Calu3 (cell line): ENCODE measurements at regions of chr6 and their contacts with region 1.

Region 1: GRCh38 chr6:18293076-18293904 is 29.0 kb upstream of the DEK start:
- DNase-seq: no peak
- H3K4me3 Mint-ChIP-seq: no peak overlapping the region
- H3K27ac Mint-ChIP-seq: no peak overlapping the region
- H3K4me1 Mint-ChIP-seq: no peaks in the 10 kb centered on the region
- H3K27me3 Mint-ChIP-seq: no peaks in the 10 kb centered on the region
- CTCF ChIP-seq: no peak

Region 2: GRCh38 chr6:17640477-17640917 is 652.8 kb before region 1 on chr6:
- CTCF ChIA-PET with region 1: interaction called, 12 read pairs
- intact Hi-C with region 1: no loop called
- DNase-seq: no peak
- H3K4me3 Mint-ChIP-seq: no peak overlapping the region
- H3K27ac Mint-ChIP-seq: no peak overlapping the region
- H3K4me1 Mint-ChIP-seq: no peaks in the 10 kb centered on the region
- H3K27me3 Mint-ChIP-seq: no peaks in the 10 kb centered on the region
- CTCF ChIP-seq: no peak

Region 3: DNA sequence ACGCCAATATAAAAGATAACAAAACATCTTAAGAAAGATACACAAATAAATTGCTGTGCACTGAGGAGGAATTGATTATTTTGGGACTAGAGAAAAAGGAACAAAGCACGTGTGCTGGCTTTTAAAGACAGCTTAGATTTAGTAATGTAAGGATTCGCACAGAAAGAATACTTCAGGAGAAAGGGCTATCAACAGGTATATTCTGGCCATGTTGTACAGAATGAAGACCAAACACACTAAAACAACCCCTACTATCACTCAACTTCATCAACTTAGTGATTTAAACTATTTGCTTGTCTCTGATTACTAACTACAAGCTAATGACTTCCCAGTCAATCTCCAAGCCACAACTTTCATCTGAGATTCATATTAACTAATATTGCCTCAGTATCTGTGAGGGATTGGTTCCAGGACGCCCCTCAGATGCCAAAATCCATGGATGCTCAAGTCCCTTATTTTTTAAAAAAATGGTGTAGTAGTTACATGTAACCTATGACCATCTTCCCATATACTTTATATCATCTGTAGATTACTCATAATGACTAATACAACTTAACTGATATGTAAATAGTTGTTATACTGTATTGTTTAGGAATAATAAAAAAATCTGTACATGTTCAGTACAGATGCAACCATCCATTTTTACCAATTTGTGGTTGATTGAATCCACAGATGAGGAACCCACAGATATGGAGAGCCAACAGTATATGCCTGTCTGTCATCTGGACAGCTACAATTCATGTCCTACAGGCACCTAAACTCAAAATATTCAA is 33.4 kb before region 1 on chr6:
- CTCF ChIA-PET with region 1: no interaction called
- intact Hi-C with region 1: no loop called
- DNase-seq: no peak
- H3K4me3 Mint-ChIP-seq: peak overlapping the region; percentile 79
- H3K27ac Mint-ChIP-seq: no peak overlapping the region
- H3K4me1 Mint-ChIP-seq: peaks cover 31% of the 10 kb centered on the region
- H3K27me3 Mint-ChIP-seq: no peaks in the 10 kb centered on the region
- CTCF ChIP-seq: no peak

Region 4: DNA sequence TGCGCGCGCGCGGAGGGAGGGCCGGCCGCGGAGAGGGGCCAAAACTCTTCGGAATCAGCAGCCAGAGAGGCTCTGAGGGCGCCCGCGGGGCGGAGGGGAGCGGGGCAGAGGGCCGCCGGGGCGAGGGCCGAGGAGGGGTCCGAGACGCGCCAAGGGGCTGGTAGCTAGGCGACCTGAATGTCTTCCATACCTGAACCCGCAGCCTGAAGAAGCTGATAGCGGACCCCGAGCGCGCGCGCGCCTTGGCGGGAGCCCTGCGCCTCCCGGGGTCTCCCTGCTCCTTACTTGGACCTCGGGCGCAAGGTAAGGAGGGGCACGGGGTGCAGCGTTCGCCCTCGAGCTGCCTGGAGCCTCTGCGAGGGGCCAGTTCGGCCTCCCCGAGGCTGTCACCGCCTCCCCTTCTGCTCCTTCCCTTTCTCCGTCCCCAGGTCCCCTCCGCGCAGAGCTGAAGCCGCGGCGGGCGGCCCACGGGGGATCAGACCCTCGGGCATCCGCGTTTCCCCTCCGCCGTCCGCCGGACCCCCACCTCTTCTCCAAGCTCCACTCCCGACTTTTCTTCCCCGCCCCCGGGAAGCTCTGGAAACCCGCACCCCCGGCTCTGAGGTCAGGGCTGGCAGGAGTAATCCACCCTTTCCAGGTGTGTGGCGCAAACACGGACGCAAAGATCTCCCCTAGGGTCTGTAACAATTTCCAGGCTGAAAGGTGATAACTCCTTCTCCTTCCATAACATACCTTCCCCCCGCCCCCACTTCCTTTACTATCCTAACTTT is 15.9 kb before region 1 on chr6:
- CTCF ChIA-PET with region 1: no interaction called
- intact Hi-C with region 1: no loop called
- DNase-seq: no peak
- H3K4me3 Mint-ChIP-seq: peak overlapping the region; percentile 76
- H3K27ac Mint-ChIP-seq: no peak overlapping the region
- H3K4me1 Mint-ChIP-seq: no peaks in the 10 kb centered on the region
- H3K27me3 Mint-ChIP-seq: peaks cover 39% of the 10 kb centered on the region
- CTCF ChIP-seq: no peak